H1 (cell line): ENCODE measurements at regions of chr21 and their contacts with region 1.

Region 1: DNA sequence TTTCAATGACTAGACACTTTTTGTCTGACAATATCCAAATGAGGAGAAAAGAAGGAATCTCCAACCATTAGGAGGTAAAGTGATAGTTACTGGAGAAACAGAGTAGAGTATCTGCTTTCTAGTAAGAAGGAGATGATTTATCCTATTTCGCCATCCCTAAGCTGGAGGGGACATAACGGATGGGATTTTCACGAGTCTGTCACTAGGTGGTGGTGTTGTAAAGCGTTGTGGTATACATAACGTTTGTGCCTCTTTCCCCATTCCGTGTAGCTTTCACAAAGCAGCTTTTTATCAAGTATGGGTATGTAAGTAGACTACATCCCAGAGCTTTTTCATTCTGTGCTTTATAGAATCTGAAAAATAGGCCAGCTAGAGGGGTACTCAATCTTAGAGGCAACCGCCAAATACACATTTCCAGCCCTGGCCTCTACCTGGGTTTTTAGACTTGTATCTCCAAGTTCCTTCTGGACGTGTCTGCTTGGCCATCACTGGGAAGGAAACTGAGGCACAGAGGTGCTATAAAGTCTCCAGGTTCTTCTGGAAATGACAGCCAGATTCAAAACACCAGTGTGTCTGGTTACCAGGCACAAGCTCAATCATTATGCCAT is 33.3 kb upstream of the FAM3B start:
- DNase-seq: no peak
- H3K4me3 ChIP-seq: no peak overlapping the region
- H3K27ac ChIP-seq: no peak overlapping the region
- H3K4me1 ChIP-seq: 0 out of 7 replicates have a peak, but pooled peaks cover 0 to 3% (median 0%) of the 10 kb centered on the region in 4 experiments
- H3K27me3 ChIP-seq: no peaks in the 10 kb centered on the region
- CTCF ChIP-seq: peak; percentile 17 to 82 (median 80)
- EP300 ChIP-seq: no peak
- POLR2A ChIP-seq: no peak
- RAD21 ChIP-seq: peak; percentile 95 to 96

Region 2: GRCh38 chr21:40952551-40953274 is 330.6 kb before region 1 on chr21:
- CTCF ChIA-PET with region 1: no interaction called
- POLR2A ChIA-PET with region 1: no interaction called
- DNase-seq: no peak
- H3K4me3 ChIP-seq: no peak overlapping the region
- H3K27ac ChIP-seq: no peak overlapping the region
- H3K4me1 ChIP-seq: no peaks in the 10 kb centered on the region
- H3K27me3 ChIP-seq: no peaks in the 10 kb centered on the region; a peak in 1 of 7 replicates
- CTCF ChIP-seq: no peak
- EP300 ChIP-seq: no peak
- POLR2A ChIP-seq: no peak
- RAD21 ChIP-seq: no peak

Region 3: GRCh38 chr21:41219498-41220173 is 63.7 kb before region 1 on chr21:
- CTCF ChIA-PET with region 1: no interaction called
- POLR2A ChIA-PET with region 1: no interaction called
- DNase-seq: no peak
- H3K4me3 ChIP-seq: no peak overlapping the region
- H3K27ac ChIP-seq: no peak overlapping the region
- H3K4me1 ChIP-seq: no peaks in the 10 kb centered on the region
- H3K27me3 ChIP-seq: no peaks in the 10 kb centered on the region
- CTCF ChIP-seq: no peak
- EP300 ChIP-seq: no peak
- POLR2A ChIP-seq: no peak
- RAD21 ChIP-seq: no peak

Region 4: DNA sequence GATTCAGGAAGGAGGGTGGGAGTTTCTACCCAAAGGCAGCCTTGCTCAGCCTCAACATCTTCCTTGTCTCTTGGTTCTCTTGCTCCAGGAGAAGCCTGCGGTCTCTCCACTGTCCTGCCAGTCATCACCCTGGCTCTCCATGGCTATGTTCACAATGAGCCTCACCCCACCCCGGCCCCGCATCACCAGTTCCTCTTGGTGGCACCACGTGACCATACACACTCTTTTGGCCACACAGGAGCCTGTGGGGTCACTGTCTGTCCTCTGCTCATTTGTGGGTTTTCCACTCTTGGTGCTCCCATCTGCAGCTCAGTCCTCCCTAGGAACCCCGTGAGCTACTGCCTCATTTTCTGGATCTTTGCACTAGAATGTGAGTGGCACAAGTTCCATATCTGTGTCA is 26.8 kb after region 1 on chr21:
- CTCF ChIA-PET with region 1: interaction called, 12 read pairs
- POLR2A ChIA-PET with region 1: no interaction called
- DNase-seq: no peak
- H3K4me3 ChIP-seq: no peak overlapping the region
- H3K27ac ChIP-seq: no peak overlapping the region
- H3K4me1 ChIP-seq: peaks cover 0 to 3% (median 0%) of the 10 kb centered on the region in 4 experiments; a peak in 1 of 7 replicates
- H3K27me3 ChIP-seq: peaks cover 0 to 1% (median 0%) of the 10 kb centered on the region in 4 experiments; a peak in 2 of 7 replicates
- CTCF ChIP-seq: no peak
- EP300 ChIP-seq: no peak
- POLR2A ChIP-seq: no peak
- RAD21 ChIP-seq: no peak

Region 5: GRCh38 chr21:41361786-41362604 is 78.7 kb after region 1 on chr21 and contains the start of gene MX2:
- CTCF ChIA-PET with region 1: interaction called, 72 read pairs
- POLR2A ChIA-PET with region 1: interaction called, 3 read pairs
- DNase-seq: no peak
- H3K4me3 ChIP-seq: no peak within 1 kb of the TSS
- H3K27ac ChIP-seq: no peak within 1 kb of the TSS
- H3K4me1 ChIP-seq: peaks cover 0 to 6% (median 4%) of the 10 kb centered on the region in 4 experiments; a peak in 4 of 7 replicates
- H3K27me3 ChIP-seq: no peaks in the 10 kb centered on the region; a peak in 2 of 7 replicates
- CTCF ChIP-seq: no peak
- EP300 ChIP-seq: no peak
- POLR2A ChIP-seq: no peak
- RAD21 ChIP-seq: no peak
- total RNA-seq, gene MX2: 8.9 TPM in 2 replicates

Region 6: DNA sequence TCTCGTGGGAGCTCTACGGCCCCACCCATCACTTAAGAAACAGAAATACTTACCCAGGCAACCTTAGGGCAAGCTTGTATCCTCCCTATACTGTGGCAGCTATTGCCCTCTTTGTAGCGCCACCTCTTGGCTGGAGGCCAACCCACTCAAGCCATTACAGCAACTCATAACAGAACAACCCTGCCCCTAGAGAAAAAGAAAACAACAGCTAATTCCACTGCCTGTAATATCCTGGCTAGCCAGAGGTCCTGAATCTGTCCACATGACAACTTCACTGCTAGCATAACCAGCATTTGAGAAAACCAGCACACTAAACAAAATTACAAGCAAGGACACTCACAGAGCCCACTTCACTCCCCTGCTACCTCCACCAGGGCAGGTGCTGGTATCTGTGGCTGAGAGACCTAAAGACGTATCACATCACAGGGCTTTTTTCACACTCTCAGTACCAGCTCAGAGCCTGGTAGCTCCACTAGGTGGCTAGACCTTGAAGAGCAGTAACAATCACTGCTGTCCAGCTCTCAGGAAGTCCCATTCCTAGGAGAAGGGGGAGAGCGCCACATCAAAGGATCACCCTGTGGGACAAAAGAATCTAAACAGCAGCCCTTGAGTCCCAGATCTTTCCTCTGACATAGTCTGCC is 128.3 kb after region 1 on chr21:
- CTCF ChIA-PET with region 1: interaction called, 17 read pairs
- POLR2A ChIA-PET with region 1: no interaction called
- DNase-seq: peak in 1 of 2 experiments; percentile 60
- H3K4me3 ChIP-seq: no peak overlapping the region
- H3K27ac ChIP-seq: no peak overlapping the region
- H3K4me1 ChIP-seq: no peaks in the 10 kb centered on the region
- H3K27me3 ChIP-seq: no peaks in the 10 kb centered on the region
- CTCF ChIP-seq: peak; percentile 38 to 53 (median 41)
- EP300 ChIP-seq: no peak
- POLR2A ChIP-seq: no peak
- RAD21 ChIP-seq: peak in 1 of 2 experiments; percentile 44; a peak in 2 of 4 replicates

Region 7: GRCh38 chr21:41460578-41461527 is 177.5 kb after region 1 on chr21:
- CTCF ChIA-PET with region 1: interaction called, 36 read pairs
- POLR2A ChIA-PET with region 1: no interaction called
- DNase-seq: peak in 1 of 2 experiments; percentile 70
- H3K4me3 ChIP-seq: no peak overlapping the region
- H3K27ac ChIP-seq: no peak overlapping the region
- H3K4me1 ChIP-seq: peaks cover 0 to 7% (median 1%) of the 10 kb centered on the region in 4 experiments; a peak in 4 of 7 replicates
- H3K27me3 ChIP-seq: no peaks in the 10 kb centered on the region
- CTCF ChIP-seq: peak; percentile 70 to 88 (median 83)
- EP300 ChIP-seq: no peak
- POLR2A ChIP-seq: no peak
- RAD21 ChIP-seq: peak; percentile 79 to 84